ENCODE measurements at regions of chrX and their contacts with region 1.

Region 1: DNA sequence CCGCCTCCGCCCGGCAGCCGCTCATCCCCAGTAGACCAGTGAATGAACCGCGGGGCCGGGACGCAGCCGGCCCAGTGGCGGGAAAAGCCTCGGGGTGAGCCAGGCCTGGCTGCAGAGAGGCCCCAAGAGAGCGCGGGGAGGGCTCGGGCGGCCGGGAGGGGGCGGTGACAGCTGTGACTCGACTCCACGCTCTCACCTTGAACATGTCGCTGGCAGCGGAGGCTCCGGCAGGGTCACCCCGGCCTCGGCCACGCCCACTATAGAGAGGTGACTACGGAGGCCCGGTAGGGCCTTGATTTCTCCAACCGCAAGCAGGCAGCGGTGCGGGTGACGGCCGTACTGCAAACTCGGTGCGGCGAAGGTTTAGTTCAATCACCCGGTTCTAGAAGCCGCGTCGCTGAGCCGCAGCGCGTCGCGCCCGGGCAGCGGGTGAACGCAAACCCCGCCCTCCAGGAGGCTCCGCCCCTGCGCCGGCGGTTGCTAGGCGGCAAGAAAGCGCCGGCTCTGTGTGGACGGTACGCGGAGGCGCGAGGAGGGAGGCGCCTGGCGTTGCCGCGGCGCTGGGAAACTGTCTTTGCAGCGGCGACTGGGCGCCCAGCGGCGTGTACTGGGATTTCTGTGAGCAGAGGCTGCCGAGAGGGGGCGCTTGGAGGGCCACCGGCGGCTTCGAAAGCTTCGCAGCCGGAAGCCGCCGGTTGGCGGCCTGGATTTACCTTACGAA is at the starts of genes APOO and CXorf58:
- DNase-seq: peak; percentile 87
- H3K4me3 ChIP-seq: peak within 1 kb of the TSS; percentile 45 to 51
- H3K27ac ChIP-seq: peak within 1 kb of the TSS; percentile 82 to 87
- H3K4me1 ChIP-seq: no peaks in the 10 kb centered on the region
- H3K27me3 ChIP-seq: no peaks in the 10 kb centered on the region
- CTCF ChIP-seq: peak; percentile 57 to 95 (median 74)
- POLR2A ChIP-seq: no peak
- total RNA-seq, gene APOO: 12.3 to 17.3 TPM
- total RNA-seq, gene CXorf58: 0.14 TPM in 1 of 2 donors, not detected in the other

Region 2: GRCh38 chrX:22963196-22963595 is 944.5 kb before region 1 on chrX:
- intact Hi-C with region 1: no loop called
- DNase-seq: no peak
- H3K4me3 ChIP-seq: no peak overlapping the region
- H3K27ac ChIP-seq: no peak overlapping the region
- H3K4me1 ChIP-seq: no peaks in the 10 kb centered on the region
- H3K27me3 ChIP-seq: no peaks in the 10 kb centered on the region
- CTCF ChIP-seq: no peak
- POLR2A ChIP-seq: no peak

Region 3: DNA sequence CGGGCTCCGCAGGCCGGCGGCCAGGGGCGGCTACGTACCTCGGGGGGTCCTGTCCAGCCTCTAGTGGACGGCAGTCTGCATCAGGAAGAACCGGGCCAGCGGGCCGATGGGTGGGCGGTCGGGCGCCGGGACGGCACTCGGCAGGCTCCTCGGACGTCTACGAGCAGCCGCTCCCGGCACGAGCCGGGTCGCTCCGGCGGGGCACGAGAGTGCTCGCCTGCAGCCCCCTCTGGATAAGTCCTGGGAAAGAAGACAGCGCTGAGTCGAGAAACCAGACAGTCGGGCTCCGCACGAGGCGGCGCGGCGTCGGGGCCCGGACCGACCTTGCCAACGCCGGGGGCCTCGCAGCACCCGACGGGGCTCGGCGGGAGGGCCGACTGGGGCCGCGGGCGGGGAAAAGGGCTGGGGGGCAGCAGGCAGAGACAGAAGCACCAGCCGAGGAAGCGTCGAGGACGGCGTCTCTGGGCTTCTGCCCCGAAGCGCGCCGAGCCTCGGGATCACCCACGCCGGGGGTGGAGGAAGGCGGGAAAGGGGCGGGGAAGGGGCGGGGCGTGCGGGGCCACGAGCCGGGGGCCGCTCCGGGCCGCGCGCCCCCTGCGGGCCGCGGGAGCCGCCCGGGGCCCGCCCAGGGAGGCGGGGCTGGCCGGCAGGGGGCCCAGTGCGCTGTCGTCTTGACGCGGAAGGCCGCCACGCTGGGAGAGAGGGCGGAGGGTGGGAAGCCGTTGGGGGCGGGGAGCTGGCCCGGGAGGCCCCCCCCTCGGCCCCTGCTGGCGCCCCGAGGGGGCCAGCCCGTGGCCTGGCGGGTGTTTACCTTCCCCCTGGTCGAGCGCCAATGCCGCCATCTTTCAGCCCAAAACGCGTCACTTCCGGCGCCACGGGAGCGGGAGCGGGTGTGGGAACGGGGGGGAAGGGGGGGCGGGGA is 117.4 kb after region 1 on chrX:
- intact Hi-C with region 1: loop called (anchors 10 kb)
- DNase-seq: peak; percentile 74
- H3K4me3 ChIP-seq: peak overlapping the region; percentile 69
- H3K27ac ChIP-seq: peak overlapping the region; percentile 94 to 95
- H3K4me1 ChIP-seq: no peaks in the 10 kb centered on the region
- H3K27me3 ChIP-seq: no peaks in the 10 kb centered on the region
- CTCF ChIP-seq: peak in 2 of 4 experiments; percentile 9 to 37
- POLR2A ChIP-seq: peak; percentile 77

Region 4: DNA sequence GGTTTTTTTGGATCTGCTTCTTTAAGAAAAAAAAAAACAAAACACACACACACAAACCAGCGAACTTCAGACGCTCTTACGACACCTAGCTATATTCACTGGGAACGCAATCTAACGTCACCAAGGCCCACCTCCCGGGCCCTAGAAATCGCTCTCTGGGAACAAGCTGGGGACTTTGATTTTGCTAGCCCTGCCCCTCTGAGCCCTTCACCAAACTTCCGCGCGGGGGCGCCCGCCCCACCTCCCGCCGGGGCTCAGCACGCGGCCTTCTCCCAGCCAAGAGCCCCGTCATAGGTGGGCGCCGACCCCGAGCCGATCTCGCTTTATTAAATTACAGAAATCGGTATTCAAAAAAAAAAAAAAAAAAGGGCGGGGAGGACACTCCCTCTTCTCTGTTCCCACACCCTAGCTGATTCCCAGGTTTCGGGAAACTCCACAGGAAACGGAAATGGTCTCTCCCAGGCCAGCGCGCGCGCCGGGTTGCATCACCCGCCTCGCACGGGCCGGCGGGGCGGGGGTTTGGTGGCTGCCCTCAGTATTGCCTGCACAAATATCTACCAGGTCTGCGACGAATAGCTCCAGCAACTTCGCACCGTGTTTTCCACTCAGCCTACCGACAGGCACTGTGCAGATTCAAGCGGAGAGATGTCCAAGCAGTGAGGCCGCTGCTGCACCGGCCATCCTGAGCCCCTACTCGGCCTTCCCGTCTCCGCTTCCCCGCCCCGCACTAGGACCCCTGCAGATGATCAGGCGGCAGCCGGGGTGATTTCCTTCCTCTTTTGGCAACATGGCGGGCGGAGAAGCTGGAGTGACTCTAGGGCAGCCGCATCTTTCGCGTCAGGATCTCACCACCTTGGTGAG is 146.8 kb after region 1 on chrX and contains the start of gene EIF2S3:
- intact Hi-C with region 1: loop called (anchors 10 kb)
- DNase-seq: peak; percentile 82
- H3K4me3 ChIP-seq: peak within 1 kb of the TSS; percentile 56 to 60
- H3K27ac ChIP-seq: peak within 1 kb of the TSS; percentile 86 to 89
- H3K4me1 ChIP-seq: no peaks in the 10 kb centered on the region
- H3K27me3 ChIP-seq: no peaks in the 10 kb centered on the region
- CTCF ChIP-seq: peak; percentile 26 to 59 (median 50)
- POLR2A ChIP-seq: no peak
- total RNA-seq, gene EIF2S3: 102 to 110 TPM

Region 5: GRCh38 chrX:24150051-24150790 is 242.6 kb after region 1 on chrX:
- intact Hi-C with region 1: loop called (anchors 10 kb)
- DNase-seq: peak; percentile 84
- H3K4me3 ChIP-seq: peak overlapping the region; percentile 49 to 54
- H3K27ac ChIP-seq: peak overlapping the region; percentile 93 to 94
- H3K4me1 ChIP-seq: no peaks in the 10 kb centered on the region
- H3K27me3 ChIP-seq: no peaks in the 10 kb centered on the region
- CTCF ChIP-seq: peak; percentile 30 to 70 (median 50)
- POLR2A ChIP-seq: peak; percentile 34

Measured in prostate gland (tissue), 2 donors.